ENCODE measurements at regions of chr10 and their contacts with region 1.

Region 1: DNA sequence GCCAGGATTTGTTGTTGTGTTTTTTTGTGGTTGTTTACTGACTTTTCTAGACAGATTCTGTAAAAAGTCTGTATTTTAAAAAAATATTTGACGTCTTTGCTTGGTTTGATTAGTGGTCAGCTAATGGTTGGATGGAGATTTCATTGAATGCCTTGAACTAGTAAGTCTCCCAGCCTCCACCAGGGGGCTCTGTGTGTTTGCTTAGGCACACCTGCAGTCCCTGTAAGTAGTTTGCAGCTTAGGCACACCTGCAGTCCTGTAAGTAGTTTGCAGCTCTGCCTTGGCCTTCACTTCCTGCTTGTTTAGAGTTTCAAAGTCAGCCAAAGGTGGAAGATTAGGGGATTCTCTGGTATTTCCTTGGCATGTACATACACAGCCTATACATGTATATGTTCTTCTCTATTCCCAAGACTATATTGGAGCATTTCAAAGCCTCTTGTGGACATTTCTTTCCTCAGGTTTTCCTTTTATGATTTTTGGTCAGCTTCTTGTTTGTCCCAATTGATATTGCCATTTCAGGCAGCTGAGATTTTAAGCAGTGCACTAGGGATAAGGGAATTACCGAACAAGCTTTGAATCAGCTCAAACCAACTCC is 101.6 kb downstream of the CCSER2 start:
- DNase-seq: peak; percentile 84
- ATAC-seq: peak; percentile 89
- H3K4me3 Mint-ChIP-seq: no peak overlapping the region
- H3K27ac Mint-ChIP-seq: no peak overlapping the region
- H3K4me1 Mint-ChIP-seq: peaks cover 33% of the 10 kb centered on the region
- H3K27me3 Mint-ChIP-seq: no peaks in the 10 kb centered on the region
- CTCF ChIP-seq: peak; percentile 93

Region 2: GRCh38 chr10:84397735-84398144 is 32.3 kb before region 1 on chr10:
- CTCF ChIA-PET with region 1: interaction called, 19 read pairs
- POLR2A ChIA-PET with region 1: no interaction called
- intact Hi-C with region 1: no loop called
- DNase-seq: no peak
- ATAC-seq: no peak
- H3K4me3 Mint-ChIP-seq: no peak overlapping the region
- H3K27ac Mint-ChIP-seq: no peak overlapping the region
- H3K4me1 Mint-ChIP-seq: peaks cover 35% of the 10 kb centered on the region
- H3K27me3 Mint-ChIP-seq: no peaks in the 10 kb centered on the region
- CTCF ChIP-seq: no peak

Region 3: GRCh38 chr10:84415539-84416244 is 14.3 kb before region 1 on chr10:
- CTCF ChIA-PET with region 1: interaction called, 15 read pairs
- POLR2A ChIA-PET with region 1: no interaction called
- intact Hi-C with region 1: no loop called
- DNase-seq: no peak
- ATAC-seq: no peak
- H3K4me3 Mint-ChIP-seq: no peak overlapping the region
- H3K27ac Mint-ChIP-seq: no peak overlapping the region
- H3K4me1 Mint-ChIP-seq: peaks cover 27% of the 10 kb centered on the region
- H3K27me3 Mint-ChIP-seq: no peaks in the 10 kb centered on the region
- CTCF ChIP-seq: no peak

Region 4: DNA sequence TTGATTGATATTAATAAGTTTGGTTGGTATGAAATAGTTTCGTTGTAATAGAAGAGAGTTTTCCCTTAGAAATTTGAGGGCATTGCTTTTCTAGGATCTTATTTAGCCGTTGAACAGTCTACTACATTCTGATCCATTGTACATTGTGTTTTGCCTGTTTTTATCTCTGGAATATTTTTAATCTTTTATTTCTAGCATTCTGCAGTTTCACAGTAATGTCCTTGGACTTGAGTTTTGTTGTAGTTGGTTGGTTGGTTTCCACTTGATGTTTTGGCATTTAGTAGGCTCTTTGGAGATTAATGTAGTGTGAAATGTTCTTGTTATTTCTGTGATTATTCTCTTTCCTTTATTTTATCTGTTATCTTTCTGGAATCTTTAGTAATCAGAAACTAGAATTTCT is 10.8 kb after region 1 on chr10:
- CTCF ChIA-PET with region 1: interaction called, 25 read pairs
- POLR2A ChIA-PET with region 1: no interaction called
- intact Hi-C with region 1: no loop called
- DNase-seq: no peak
- ATAC-seq: no peak
- H3K4me3 Mint-ChIP-seq: no peak overlapping the region
- H3K27ac Mint-ChIP-seq: no peak overlapping the region
- H3K4me1 Mint-ChIP-seq: peaks cover 9% of the 10 kb centered on the region
- H3K27me3 Mint-ChIP-seq: no peaks in the 10 kb centered on the region
- CTCF ChIP-seq: no peak

Region 5: GRCh38 chr10:84590327-84591193 is 160.5 kb after region 1 on chr10:
- CTCF ChIA-PET with region 1: no interaction called
- POLR2A ChIA-PET with region 1: no interaction called
- intact Hi-C with region 1: no loop called
- DNase-seq: no peak
- ATAC-seq: no peak
- H3K4me3 Mint-ChIP-seq: no peak overlapping the region
- H3K27ac Mint-ChIP-seq: no peak overlapping the region
- H3K4me1 Mint-ChIP-seq: no peaks in the 10 kb centered on the region
- H3K27me3 Mint-ChIP-seq: peaks cover 5% of the 10 kb centered on the region
- CTCF ChIP-seq: no peak

Measured in activated CD8-positive, alpha-beta T cell treated with anti-CD3 and anti-CD28 coated beads for 36 hours (primary cell).